Activated T-helper 2 cell treated with anti-CD3 and anti-CD28 coated beads, Interferon-gamma antibody, Interleukin-2, Interleukin-4, amounts not matched to agents 10 μg/mL and 5 μg/mL and 100 μg/mL, durations not matched to agents 14 hours and 24 hours and 36 hours (primary cell): ENCODE measurements at regions of chr11 and their contacts with region 1.

Region 1: DNA sequence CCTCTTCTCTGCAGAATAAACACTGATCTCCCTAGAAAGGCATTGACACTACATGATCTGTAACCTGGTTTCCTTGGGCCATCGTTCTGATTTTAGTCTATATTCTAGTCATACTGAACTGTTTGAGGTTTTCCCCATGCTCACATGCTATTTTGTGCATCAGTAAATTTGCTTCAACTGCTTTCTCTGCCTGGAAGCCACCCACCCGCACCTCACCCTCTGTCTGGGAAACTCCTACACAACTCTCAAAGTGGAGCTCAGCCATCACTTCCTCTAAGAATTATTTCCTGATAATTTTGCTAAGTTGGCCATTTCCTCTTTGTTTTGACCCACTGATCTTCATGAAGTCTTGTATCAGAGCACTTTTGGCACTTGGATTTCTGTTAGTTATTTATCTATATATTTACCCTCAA is 36.1 kb downstream of the MMP20 start:
- DNase-seq: no peak
- H3K4me3 Mint-ChIP-seq: no peak overlapping the region
- H3K27ac Mint-ChIP-seq: peak overlapping the region; percentile 31
- H3K4me1 Mint-ChIP-seq: peaks cover 32% of the 10 kb centered on the region
- H3K27me3 Mint-ChIP-seq: no peaks in the 10 kb centered on the region

Region 2: DNA sequence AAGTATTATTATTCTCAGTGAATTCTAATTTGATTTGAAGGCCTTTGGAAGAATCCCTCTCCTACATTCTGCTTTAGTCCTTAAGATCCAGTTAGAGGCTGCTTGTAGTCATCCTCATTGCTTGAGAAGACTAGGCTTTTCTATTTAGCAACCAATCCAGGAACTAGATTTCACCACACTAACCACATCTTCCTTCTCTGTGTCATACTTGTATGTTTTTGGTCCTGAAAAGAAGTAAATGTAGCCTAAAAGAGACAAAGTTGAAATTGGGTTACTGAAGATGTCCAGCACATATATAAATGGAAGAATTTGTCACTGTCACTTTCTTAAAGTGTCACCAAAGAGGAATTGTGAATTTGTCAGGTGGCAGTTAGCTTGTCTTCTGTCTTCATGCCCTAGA is 11.9 kb before region 1 on chr11:
- intact Hi-C with region 1: loop called (anchors 1 kb)
- DNase-seq: no peak
- H3K4me3 Mint-ChIP-seq: no peak overlapping the region
- H3K27ac Mint-ChIP-seq: no peak overlapping the region
- H3K4me1 Mint-ChIP-seq: peaks cover 36% of the 10 kb centered on the region
- H3K27me3 Mint-ChIP-seq: no peaks in the 10 kb centered on the region

Region 3: GRCh38 chr11:102604877-102605276 is 15.8 kb after region 1 on chr11:
- intact Hi-C with region 1: no loop called
- DNase-seq: no peak
- H3K4me3 Mint-ChIP-seq: no peak overlapping the region
- H3K27ac Mint-ChIP-seq: no peak overlapping the region
- H3K4me1 Mint-ChIP-seq: peaks cover 16% of the 10 kb centered on the region
- H3K27me3 Mint-ChIP-seq: peaks cover 2% of the 10 kb centered on the region